ENCODE measurements at regions of chr13 and their contacts with region 1.

Region 1: GRCh38 chr13:51286135-51287002 is 53.1 kb upstream of the SERPINE3 start:
- DNase-seq: peak; percentile 72
- H3K4me3 Mint-ChIP-seq: no peak overlapping the region
- H3K27ac Mint-ChIP-seq: no peak overlapping the region
- H3K4me1 Mint-ChIP-seq: no peaks in the 10 kb centered on the region
- H3K27me3 Mint-ChIP-seq: peaks cover 12% of the 10 kb centered on the region
- CTCF ChIP-seq: peak; percentile 68

Region 2: GRCh38 chr13:51125498-51126226 is 160.7 kb before region 1 on chr13:
- CTCF ChIA-PET with region 1: interaction called, 21 read pairs
- intact Hi-C with region 1: loop called (anchors 1 kb)
- DNase-seq: peak; percentile 46
- H3K4me3 Mint-ChIP-seq: no peak overlapping the region
- H3K27ac Mint-ChIP-seq: no peak overlapping the region
- H3K4me1 Mint-ChIP-seq: peaks cover 16% of the 10 kb centered on the region
- H3K27me3 Mint-ChIP-seq: peaks cover 24% of the 10 kb centered on the region
- CTCF ChIP-seq: peak; percentile 54

Region 3: GRCh38 chr13:51148952-51149573 is 137.3 kb before region 1 on chr13:
- CTCF ChIA-PET with region 1: interaction called, 37 read pairs
- intact Hi-C with region 1: loop called (anchors 1 kb)
- DNase-seq: peak; percentile 17
- H3K4me3 Mint-ChIP-seq: no peak overlapping the region
- H3K27ac Mint-ChIP-seq: no peak overlapping the region
- H3K4me1 Mint-ChIP-seq: no peaks in the 10 kb centered on the region
- H3K27me3 Mint-ChIP-seq: peaks cover 39% of the 10 kb centered on the region
- CTCF ChIP-seq: no peak

Region 4: DNA sequence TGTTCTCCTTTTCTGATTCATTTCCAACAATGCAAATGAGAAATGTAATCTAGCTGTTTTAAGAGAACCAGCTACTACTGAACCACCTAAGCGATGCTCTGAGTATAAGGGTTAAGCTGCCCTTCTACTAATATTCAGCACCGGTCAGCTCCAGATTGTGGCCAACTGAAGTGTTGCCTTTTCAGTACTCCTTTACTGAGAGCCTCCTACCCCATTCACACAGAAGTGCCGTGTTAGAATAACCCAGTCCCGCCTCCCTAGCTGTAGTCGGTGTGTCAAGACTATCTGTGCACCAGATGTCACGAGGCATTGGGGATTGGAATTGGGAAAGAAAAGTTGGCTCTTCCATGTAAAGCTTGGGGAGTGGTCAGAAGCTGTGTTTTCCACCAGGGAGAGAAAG is 18.7 kb before region 1 on chr13:
- CTCF ChIA-PET with region 1: no interaction called
- intact Hi-C with region 1: no loop called
- DNase-seq: no peak
- H3K4me3 Mint-ChIP-seq: no peak overlapping the region
- H3K27ac Mint-ChIP-seq: no peak overlapping the region
- H3K4me1 Mint-ChIP-seq: no peaks in the 10 kb centered on the region
- H3K27me3 Mint-ChIP-seq: no peaks in the 10 kb centered on the region
- CTCF ChIP-seq: no peak

Measured in Calu3 (cell line).